Left lung (tissue), 14 donors: ENCODE measurements at regions of chr1 and their contacts with region 1.

Region 1: GRCh38 chr1:152189657-152190442 is 30.8 kb upstream of the RPTN start:
- DNase-seq: peak; percentile 44 to 68 (median 62)
- ATAC-seq: peak; percentile 81
- H3K4me3 ChIP-seq: peak overlapping the region; percentile 38 to 50
- H3K27ac ChIP-seq: no peak overlapping the region
- H3K4me1 ChIP-seq: peaks cover 0 to 12% of the 10 kb centered on the region in 2 donors
- H3K27me3 ChIP-seq: peaks cover 0 to 13% of the 10 kb centered on the region in 2 donors
- CTCF ChIP-seq: peak; percentile 62 to 63

Region 2: DNA sequence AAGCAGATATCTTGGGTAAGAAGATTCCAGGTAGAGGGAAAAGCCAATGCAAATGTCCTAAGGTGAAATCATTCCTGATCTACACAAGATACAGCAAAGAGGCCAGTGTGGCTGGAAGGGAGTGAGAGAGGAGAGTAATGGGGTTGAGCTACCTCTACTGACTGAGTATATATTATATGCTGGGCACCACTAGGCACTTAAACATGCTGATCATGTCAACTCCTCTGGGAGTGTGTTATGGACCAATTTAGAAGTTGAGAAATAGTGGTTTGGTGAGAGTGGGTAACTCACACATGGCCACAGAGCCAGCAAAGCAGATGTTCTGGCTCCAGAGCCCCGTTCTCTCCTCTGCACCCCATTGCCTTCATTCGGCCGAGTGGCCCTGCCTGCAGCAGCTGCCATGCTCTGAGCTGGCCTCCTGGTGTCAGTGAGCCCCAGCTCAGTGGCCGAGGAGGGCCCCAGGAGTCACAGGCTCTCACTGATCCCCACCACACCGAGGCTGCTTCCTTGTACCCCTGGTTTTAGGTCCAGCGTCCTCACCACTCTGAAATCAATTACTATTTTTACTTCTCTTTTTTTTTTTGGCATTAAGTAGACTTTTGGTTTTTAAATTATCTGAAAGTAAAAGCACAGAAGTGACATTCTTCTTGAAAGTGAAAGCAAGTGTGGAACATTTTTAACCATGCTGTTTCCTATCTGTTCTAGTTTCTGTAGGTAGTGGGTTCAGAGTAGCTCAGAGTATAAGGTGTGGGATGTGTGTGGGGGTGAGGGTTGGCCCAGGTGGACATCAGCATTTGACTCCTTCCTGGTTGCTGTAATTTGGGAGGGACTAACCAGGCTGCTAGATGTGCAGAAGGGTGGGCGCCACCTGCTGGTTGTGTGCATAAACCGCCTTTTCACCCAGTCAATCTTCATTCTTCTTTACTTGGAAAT is 270.0 kb after region 1 on chr1:
- intact Hi-C with region 1: loop called in 1 of 2 experiments (anchors 10 kb)
- DNase-seq: peak; percentile 31 to 88 (median 58)
- ATAC-seq: peak; percentile 83
- H3K4me3 ChIP-seq: no peak overlapping the region
- H3K27ac ChIP-seq: peak overlapping the region in 1 of 2 donors; percentile 53
- H3K4me1 ChIP-seq: peaks cover 0 to 8% of the 10 kb centered on the region in 2 donors
- H3K27me3 ChIP-seq: peaks cover 0 to 3% of the 10 kb centered on the region in 2 donors
- CTCF ChIP-seq: peak; percentile 68 to 75